ENCODE measurements at regions of chr7 and their contacts with region 1.

Region 1: DNA sequence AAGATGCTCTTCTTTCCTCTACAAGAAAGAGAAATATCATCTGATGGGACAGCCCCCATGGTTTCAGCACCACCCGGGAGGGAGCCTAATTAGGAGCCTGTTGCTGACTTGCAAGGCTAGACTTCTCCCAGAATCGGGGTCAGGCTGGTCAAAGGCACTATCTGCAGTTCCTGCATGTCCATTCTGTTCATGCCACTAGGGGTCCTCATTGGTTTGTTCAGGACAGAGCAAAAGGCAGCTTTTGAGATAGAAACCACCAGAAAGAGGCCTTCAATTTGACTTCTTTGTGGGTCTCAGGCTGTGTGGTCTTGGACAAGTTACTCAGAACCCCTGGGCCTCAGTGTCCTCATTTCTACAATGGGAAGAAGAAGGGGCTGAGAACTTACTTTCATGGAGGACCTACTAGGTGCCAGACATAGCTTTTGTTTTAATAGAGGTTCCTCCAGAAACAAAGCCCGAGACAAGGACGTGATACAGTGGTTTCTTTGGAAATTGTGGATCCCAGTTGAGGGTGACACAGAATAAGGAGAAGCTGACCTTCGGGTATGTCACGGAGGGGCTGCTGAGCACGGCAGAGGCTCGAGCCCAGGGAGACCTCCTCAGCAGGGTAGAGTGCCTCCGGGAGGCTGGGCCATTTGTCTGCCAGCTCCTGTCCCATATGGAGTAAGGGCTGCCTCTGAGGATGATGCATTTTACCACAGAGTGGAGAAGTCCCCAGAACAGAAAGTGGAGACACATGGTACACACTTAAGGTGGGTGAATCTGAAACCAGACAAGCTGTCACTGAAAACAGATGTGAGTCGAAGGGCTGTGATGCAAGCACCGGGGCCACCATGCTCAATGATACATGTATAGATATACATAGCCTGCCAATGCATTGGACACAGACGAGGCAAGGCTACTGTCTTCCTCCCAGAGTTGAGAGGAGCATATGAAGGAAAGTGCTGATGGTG is 33.1 kb upstream of the NEUROD6 start:
- DNase-seq: peak; percentile 54 to 59 (median 55)
- ATAC-seq: peak; percentile 96
- H3K4me3 ChIP-seq: no peak overlapping the region
- H3K27ac ChIP-seq: no peak overlapping the region
- H3K4me1 ChIP-seq: no peaks in the 10 kb centered on the region
- H3K27me3 ChIP-seq: peaks cover 4 to 13% of the 10 kb centered on the region in 2 experiments; a peak in 3 of 5 replicates
- CTCF ChIP-seq: peak; percentile 72 to 78 (median 74)
- EP300 ChIP-seq: no peak
- POLR2A ChIP-seq: no peak
- RAD21 ChIP-seq: peak; percentile 29 to 65

Region 2: GRCh38 chr7:31074120-31074383 is 299.6 kb before region 1 on chr7:
- CTCF ChIA-PET with region 1: no interaction called
- POLR2A ChIA-PET with region 1: no interaction called
- in situ Hi-C with region 1: no loop called
- intact Hi-C with region 1: no loop called
- DNase-seq: no peak
- ATAC-seq: no peak
- H3K4me3 ChIP-seq: no peak overlapping the region
- H3K27ac ChIP-seq: no peak overlapping the region
- H3K4me1 ChIP-seq: no peaks in the 10 kb centered on the region
- H3K27me3 ChIP-seq: peaks cover 5 to 66% of the 10 kb centered on the region in 2 experiments; a peak in 4 of 5 replicates
- CTCF ChIP-seq: no peak
- EP300 ChIP-seq: no peak
- POLR2A ChIP-seq: no peak
- RAD21 ChIP-seq: no peak

Region 3: DNA sequence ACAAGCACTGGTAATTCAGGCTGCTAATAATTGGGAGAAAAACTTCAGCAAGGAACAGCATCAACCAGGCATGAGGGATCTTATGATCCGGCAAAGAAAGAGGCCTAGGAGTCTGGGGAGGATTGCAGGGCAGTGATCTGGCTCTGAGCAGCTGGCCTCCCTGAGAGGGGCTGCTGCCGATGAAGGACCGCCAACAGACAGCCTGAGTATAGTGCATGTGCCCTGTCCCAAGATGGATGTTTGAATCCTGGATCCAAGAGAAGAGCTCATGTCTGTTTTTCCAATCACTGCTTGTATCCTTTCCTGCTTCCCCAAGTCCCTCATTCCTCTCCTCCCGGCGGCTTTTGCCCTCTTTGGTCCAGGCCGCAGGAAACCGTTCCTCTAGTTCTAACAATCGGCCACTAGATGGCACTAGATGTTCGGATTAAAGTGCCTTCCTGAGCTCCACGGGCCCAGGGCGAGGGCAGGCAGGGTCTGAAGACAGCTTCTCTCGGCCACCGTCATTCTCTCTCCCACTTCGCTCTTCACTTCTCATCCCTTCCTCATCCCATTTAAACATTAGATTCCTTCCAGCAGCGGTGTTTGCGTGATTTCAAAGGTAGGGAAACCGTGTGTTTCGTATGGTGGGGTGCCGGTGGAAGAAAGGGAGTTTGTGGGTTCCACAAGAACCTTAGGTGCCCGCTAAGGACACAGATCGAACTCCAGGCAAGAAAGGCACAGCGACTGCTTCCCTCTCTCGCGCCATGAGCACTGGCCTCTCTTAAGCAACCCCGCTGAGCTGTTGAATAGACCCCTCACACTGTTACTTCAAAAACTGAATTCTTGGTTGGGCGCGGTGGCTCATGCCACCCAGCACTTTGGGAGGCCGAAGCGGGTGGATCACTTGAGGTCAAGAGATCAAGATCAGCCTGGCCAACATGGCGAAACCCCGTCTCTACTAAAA is 239.1 kb before region 1 on chr7:
- CTCF ChIA-PET with region 1: no interaction called
- POLR2A ChIA-PET with region 1: no interaction called
- in situ Hi-C with region 1: no loop called
- intact Hi-C with region 1: loop called (anchors 10 kb)
- DNase-seq: peak; percentile 69 to 82 (median 74)
- ATAC-seq: peak; percentile 99
- H3K4me3 ChIP-seq: no peak overlapping the region
- H3K27ac ChIP-seq: no peak overlapping the region
- H3K4me1 ChIP-seq: no peaks in the 10 kb centered on the region
- H3K27me3 ChIP-seq: peaks cover 0 to 4% of the 10 kb centered on the region in 2 experiments; a peak in 3 of 5 replicates
- CTCF ChIP-seq: peak; percentile 69 to 80 (median 78)
- EP300 ChIP-seq: no peak
- POLR2A ChIP-seq: no peak
- RAD21 ChIP-seq: peak; percentile 51 to 76

Region 4: DNA sequence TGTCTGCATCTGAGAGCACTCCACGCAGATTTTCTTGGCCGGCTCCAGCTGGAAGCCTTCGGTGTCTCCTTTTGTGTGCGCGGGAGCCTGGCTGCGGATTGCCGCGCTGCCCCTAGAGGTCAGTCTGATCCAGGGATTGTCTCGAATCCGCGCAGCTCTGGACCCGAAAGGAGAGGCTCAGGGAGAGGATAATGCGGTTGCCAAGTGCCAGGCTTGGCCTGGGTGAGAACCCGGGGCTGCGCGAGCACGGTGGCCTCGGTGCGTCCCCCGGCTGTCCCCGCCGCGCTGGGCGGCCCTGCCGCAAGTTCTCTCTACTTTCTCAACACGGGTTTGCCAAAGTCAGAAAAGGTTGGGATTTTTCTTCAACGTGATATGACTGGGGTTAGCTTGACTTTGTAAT is 180.6 kb before region 1 on chr7:
- CTCF ChIA-PET with region 1: no interaction called
- POLR2A ChIA-PET with region 1: no interaction called
- in situ Hi-C with region 1: no loop called
- intact Hi-C with region 1: loop called (anchors 10 kb)
- DNase-seq: peak; percentile 53 to 63 (median 59)
- ATAC-seq: peak; percentile 100
- H3K4me3 ChIP-seq: no peak overlapping the region
- H3K27ac ChIP-seq: no peak overlapping the region
- H3K4me1 ChIP-seq: peaks cover 0 to 4% of the 10 kb centered on the region in 2 experiments; a peak in 1 of 5 replicates
- H3K27me3 ChIP-seq: no peaks in the 10 kb centered on the region
- CTCF ChIP-seq: peak; percentile 77 to 81 (median 81)
- EP300 ChIP-seq: no peak
- POLR2A ChIP-seq: no peak
- RAD21 ChIP-seq: peak; percentile 18 to 67; a peak in 3 of 4 replicates

Region 5: GRCh38 chr7:31443457-31443856 is 69.8 kb after region 1 on chr7:
- CTCF ChIA-PET with region 1: no interaction called
- POLR2A ChIA-PET with region 1: no interaction called
- in situ Hi-C with region 1: no loop called
- intact Hi-C with region 1: loop called (anchors 2 kb)
- DNase-seq: peak; percentile 53 to 63 (median 57)
- ATAC-seq: peak; percentile 89
- H3K4me3 ChIP-seq: no peak overlapping the region
- H3K27ac ChIP-seq: no peak overlapping the region
- H3K4me1 ChIP-seq: no peaks in the 10 kb centered on the region
- H3K27me3 ChIP-seq: no peaks in the 10 kb centered on the region
- CTCF ChIP-seq: peak; percentile 58 to 78 (median 76); a peak in 5 of 6 replicates
- EP300 ChIP-seq: no peak
- POLR2A ChIP-seq: no peak
- RAD21 ChIP-seq: peak; percentile 54 to 67

Region 6: DNA sequence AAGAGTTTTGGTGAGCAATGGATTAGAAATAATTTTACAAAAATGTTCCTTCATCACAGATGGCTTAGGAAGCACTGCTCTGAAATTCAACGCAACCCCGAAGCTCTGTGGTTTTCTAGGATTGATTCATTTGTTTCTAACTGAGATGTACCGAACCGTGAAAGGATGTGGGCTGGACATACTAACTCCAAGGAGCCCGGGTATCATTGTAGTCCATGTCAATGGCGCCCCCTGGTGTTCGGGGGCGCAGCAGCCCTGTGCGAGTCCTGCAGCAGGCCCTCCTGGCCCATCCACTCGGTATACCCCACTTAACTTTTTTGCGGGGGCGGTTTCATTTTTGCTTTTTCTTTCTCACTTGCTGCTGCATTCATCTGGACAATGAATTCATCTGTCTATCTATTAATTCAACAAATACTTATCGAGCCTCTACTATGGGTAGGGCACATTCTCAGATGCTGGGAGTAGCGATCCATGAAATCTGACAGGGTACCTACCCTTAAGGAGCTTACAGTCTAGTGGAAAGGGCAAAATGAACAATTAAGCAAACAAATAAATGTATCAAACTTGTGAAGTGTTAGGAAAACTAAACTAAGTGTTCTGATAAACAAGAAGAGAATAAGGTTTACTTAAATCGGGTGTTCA is 115.1 kb after region 1 on chr7:
- CTCF ChIA-PET with region 1: interaction called, 4 read pairs
- POLR2A ChIA-PET with region 1: no interaction called
- in situ Hi-C with region 1: no loop called
- intact Hi-C with region 1: loop called (anchors 1 kb)
- DNase-seq: peak; percentile 74 to 88 (median 82)
- ATAC-seq: peak; percentile 99
- H3K4me3 ChIP-seq: no peak overlapping the region
- H3K27ac ChIP-seq: no peak overlapping the region
- H3K4me1 ChIP-seq: no peaks in the 10 kb centered on the region
- H3K27me3 ChIP-seq: no peaks in the 10 kb centered on the region
- CTCF ChIP-seq: peak; percentile 81 to 91 (median 84)
- EP300 ChIP-seq: no peak
- POLR2A ChIP-seq: no peak
- RAD21 ChIP-seq: peak; percentile 45 to 72

Region 7: GRCh38 chr7:31633894-31634494 is 260.4 kb after region 1 on chr7:
- CTCF ChIA-PET with region 1: no interaction called
- POLR2A ChIA-PET with region 1: no interaction called
- in situ Hi-C with region 1: no loop called
- intact Hi-C with region 1: loop called (anchors 5 kb)
- DNase-seq: peak; percentile 26 to 56 (median 34)
- ATAC-seq: peak; percentile 91
- H3K4me3 ChIP-seq: no peak overlapping the region
- H3K27ac ChIP-seq: no peak overlapping the region
- H3K4me1 ChIP-seq: no peaks in the 10 kb centered on the region
- H3K27me3 ChIP-seq: no peaks in the 10 kb centered on the region
- CTCF ChIP-seq: peak; percentile 54 to 72 (median 68)
- EP300 ChIP-seq: no peak
- POLR2A ChIP-seq: no peak
- RAD21 ChIP-seq: peak; percentile 69 to 70

Region 8: GRCh38 chr7:31735991-31736982 is 362.7 kb after region 1 on chr7:
- CTCF ChIA-PET with region 1: no interaction called
- POLR2A ChIA-PET with region 1: no interaction called
- in situ Hi-C with region 1: no loop called
- intact Hi-C with region 1: loop called (anchors 10 kb)
- DNase-seq: peak; percentile 57 to 69 (median 64)
- ATAC-seq: peak; percentile 90
- H3K4me3 ChIP-seq: no peak overlapping the region
- H3K27ac ChIP-seq: no peak overlapping the region
- H3K4me1 ChIP-seq: no peaks in the 10 kb centered on the region
- H3K27me3 ChIP-seq: no peaks in the 10 kb centered on the region; a peak in 2 of 5 replicates
- CTCF ChIP-seq: peak; percentile 72 to 87 (median 85)
- EP300 ChIP-seq: no peak
- POLR2A ChIP-seq: no peak
- RAD21 ChIP-seq: peak; percentile 72 to 76